Activated T-helper 1 cell treated with anti-CD3 and anti-CD28 coated beads, Interleukin-12 subunit alpha, Interleukin-12 subunit beta, Interleukin-2, Interleukin-4 antibody, amounts not matched to agents 30 ng/mL and 10 ng/mL and 1 ng/mL, durations not matched to agents 14 hours and 24 hours and 36 hours (primary cell): ENCODE measurements at regions of chr7 and their contacts with region 1.

Region 1: GRCh38 chr7:150404805-150405583 is 25.9 kb downstream of the ZNF775 start:
- DNase-seq: peak; percentile 79
- H3K4me3 Mint-ChIP-seq: peak overlapping the region; percentile 95
- H3K27ac Mint-ChIP-seq: peak overlapping the region; percentile 95
- H3K4me1 Mint-ChIP-seq: peaks cover 57% of the 10 kb centered on the region
- H3K27me3 Mint-ChIP-seq: no peaks in the 10 kb centered on the region

Region 2: DNA sequence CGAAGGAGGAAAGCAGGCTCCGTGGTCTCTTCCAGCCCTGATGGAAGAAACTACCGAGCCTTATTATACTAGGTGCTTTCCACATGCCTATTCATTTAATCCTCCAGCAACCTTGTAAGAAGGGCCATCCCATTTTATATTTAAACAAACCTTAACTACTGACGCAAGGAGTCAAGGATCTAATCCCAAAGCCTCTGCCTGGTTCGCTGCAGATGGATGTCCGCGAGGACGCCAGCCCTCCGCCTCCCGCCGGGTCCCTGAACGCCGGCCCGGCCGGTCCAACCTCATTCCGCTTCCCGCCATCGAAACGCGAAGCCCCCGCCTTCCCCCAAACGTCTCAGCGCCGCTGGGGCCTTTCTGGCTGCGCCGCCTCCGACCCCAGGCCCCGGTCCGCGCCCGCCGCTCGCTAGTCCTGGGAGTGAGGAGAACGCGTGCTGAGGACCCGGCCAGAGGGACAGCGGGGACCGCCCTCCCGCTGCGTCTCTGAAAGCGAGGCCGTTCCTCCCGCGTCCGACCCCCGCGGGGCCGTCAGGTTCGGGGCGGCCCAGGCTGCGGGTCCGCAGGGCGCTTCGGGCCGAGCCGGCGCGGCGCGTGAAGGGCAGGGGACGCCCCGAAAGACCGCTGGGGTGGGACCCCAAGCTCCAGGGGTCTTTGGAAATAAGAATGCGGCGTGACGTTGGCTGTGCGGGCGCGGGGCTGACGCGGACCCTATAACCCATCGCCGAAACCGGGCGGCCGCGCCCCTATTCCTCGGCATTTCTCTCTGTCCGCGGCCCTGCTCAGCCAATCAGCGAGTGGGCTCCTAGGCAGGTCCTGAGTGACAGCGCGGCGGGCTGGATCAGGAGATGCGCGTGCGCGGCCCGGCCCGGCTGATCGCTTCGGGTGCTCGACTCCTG is 531.7 kb before region 1 on chr7 and contains the start of gene ATP6V0E2:
- intact Hi-C with region 1: loop called (anchors 10 kb)
- DNase-seq: peak; percentile 92
- H3K4me3 Mint-ChIP-seq: peak within 1 kb of the TSS; percentile 90
- H3K27ac Mint-ChIP-seq: peak within 1 kb of the TSS; percentile 92
- H3K4me1 Mint-ChIP-seq: peaks cover 75% of the 10 kb centered on the region
- H3K27me3 Mint-ChIP-seq: no peaks in the 10 kb centered on the region
- total RNA-seq, gene ATP6V0E2: 47.5 and 51.2 TPM in 2 replicates

Region 3: GRCh38 chr7:150311711-150312110 is 93.3 kb before region 1 on chr7:
- intact Hi-C with region 1: no loop called
- DNase-seq: no peak
- H3K4me3 Mint-ChIP-seq: no peak overlapping the region
- H3K27ac Mint-ChIP-seq: no peak overlapping the region
- H3K4me1 Mint-ChIP-seq: no peaks in the 10 kb centered on the region
- H3K27me3 Mint-ChIP-seq: no peaks in the 10 kb centered on the region

Region 4: GRCh38 chr7:150356265-150356897 is 48.6 kb before region 1 on chr7:
- intact Hi-C with region 1: loop called (anchors 1 kb)
- DNase-seq: no peak
- H3K4me3 Mint-ChIP-seq: no peak overlapping the region
- H3K27ac Mint-ChIP-seq: no peak overlapping the region
- H3K4me1 Mint-ChIP-seq: peaks cover 44% of the 10 kb centered on the region
- H3K27me3 Mint-ChIP-seq: peaks cover 8% of the 10 kb centered on the region

Region 5: GRCh38 chr7:150368096-150368883 is 36.7 kb before region 1 on chr7 and contains the start of gene REPIN1:
- intact Hi-C with region 1: loop called (anchors 1 kb)
- DNase-seq: peak; percentile 73
- H3K4me3 Mint-ChIP-seq: peak within 1 kb of the TSS; percentile 94
- H3K27ac Mint-ChIP-seq: peak within 1 kb of the TSS; percentile 98
- H3K4me1 Mint-ChIP-seq: peaks cover 50% of the 10 kb centered on the region
- H3K27me3 Mint-ChIP-seq: peaks cover 1% of the 10 kb centered on the region
- total RNA-seq, gene REPIN1: 67.2 and 67.4 TPM in 2 replicates

Region 6: GRCh38 chr7:150378853-150379440 is 26.0 kb before region 1 on chr7 and contains the start of gene ZNF775:
- intact Hi-C with region 1: loop called (anchors 1 kb)
- DNase-seq: peak; percentile 93
- H3K4me3 Mint-ChIP-seq: peak within 1 kb of the TSS; percentile 90
- H3K27ac Mint-ChIP-seq: peak within 1 kb of the TSS; percentile 83
- H3K4me1 Mint-ChIP-seq: peaks cover 59% of the 10 kb centered on the region
- H3K27me3 Mint-ChIP-seq: no peaks in the 10 kb centered on the region
- total RNA-seq, gene ZNF775: 3.9 and 4.5 TPM in 2 replicates

Region 7: GRCh38 chr7:150420987-150421674 is 16.1 kb after region 1 on chr7:
- intact Hi-C with region 1: loop called (anchors 1 kb)
- DNase-seq: peak; percentile 80
- H3K4me3 Mint-ChIP-seq: no peak overlapping the region
- H3K27ac Mint-ChIP-seq: no peak overlapping the region
- H3K4me1 Mint-ChIP-seq: peaks cover 12% of the 10 kb centered on the region
- H3K27me3 Mint-ChIP-seq: peaks cover 5% of the 10 kb centered on the region

Region 8: GRCh38 chr7:150439967-150440366 is 35.0 kb after region 1 on chr7:
- intact Hi-C with region 1: loop called (anchors 2 kb)
- DNase-seq: no peak
- H3K4me3 Mint-ChIP-seq: peak overlapping the region; percentile 0
- H3K27ac Mint-ChIP-seq: peak overlapping the region; percentile 66
- H3K4me1 Mint-ChIP-seq: peaks cover 41% of the 10 kb centered on the region
- H3K27me3 Mint-ChIP-seq: peaks cover 3% of the 10 kb centered on the region